Heart right ventricle (tissue), 16 donors: ENCODE measurements at regions of chr5 and their contacts with region 1.

Region 1: GRCh38 chr5:163815240-163815791 is 309.9 kb downstream of the MAT2B start:
- DNase-seq: no peak
- ATAC-seq: no peak
- H3K4me3 ChIP-seq: no peak overlapping the region
- H3K27ac ChIP-seq: no peak overlapping the region
- H3K4me1 ChIP-seq: no peaks in the 10 kb centered on the region
- H3K27me3 ChIP-seq: no peaks in the 10 kb centered on the region
- CTCF ChIP-seq: no peak

Region 2: DNA sequence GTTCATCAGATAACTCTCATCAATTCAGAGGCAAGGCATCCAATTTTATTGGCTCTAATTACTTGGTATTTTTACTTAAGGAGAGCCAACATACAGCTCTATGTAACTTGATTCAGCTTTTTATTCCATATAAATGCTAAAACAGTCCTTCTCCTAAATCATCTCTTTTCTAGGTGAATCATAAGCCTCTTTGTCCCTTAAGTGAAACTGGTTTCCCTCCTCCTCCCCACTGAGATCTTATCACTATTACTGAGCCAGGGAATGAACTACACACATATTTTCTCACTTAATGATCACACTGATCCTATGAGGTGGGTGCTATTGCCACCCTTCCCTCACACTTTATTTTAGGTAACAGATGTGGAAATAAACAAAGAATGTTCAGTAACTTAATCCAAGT is 834.0 kb after region 1 on chr5:
- intact Hi-C with region 1: loop called in 1 of 10 experiments (anchors 10 kb)
- DNase-seq: no peak
- ATAC-seq: no peak
- H3K4me3 ChIP-seq: no peak overlapping the region
- H3K27ac ChIP-seq: no peak overlapping the region
- H3K4me1 ChIP-seq: peaks cover 0 to 9% (median 0%) of the 10 kb centered on the region in 9 donors
- H3K27me3 ChIP-seq: no peaks in the 10 kb centered on the region
- CTCF ChIP-seq: no peak